ENCODE measurements at regions of chr20 and their contacts with region 1.

Region 1: DNA sequence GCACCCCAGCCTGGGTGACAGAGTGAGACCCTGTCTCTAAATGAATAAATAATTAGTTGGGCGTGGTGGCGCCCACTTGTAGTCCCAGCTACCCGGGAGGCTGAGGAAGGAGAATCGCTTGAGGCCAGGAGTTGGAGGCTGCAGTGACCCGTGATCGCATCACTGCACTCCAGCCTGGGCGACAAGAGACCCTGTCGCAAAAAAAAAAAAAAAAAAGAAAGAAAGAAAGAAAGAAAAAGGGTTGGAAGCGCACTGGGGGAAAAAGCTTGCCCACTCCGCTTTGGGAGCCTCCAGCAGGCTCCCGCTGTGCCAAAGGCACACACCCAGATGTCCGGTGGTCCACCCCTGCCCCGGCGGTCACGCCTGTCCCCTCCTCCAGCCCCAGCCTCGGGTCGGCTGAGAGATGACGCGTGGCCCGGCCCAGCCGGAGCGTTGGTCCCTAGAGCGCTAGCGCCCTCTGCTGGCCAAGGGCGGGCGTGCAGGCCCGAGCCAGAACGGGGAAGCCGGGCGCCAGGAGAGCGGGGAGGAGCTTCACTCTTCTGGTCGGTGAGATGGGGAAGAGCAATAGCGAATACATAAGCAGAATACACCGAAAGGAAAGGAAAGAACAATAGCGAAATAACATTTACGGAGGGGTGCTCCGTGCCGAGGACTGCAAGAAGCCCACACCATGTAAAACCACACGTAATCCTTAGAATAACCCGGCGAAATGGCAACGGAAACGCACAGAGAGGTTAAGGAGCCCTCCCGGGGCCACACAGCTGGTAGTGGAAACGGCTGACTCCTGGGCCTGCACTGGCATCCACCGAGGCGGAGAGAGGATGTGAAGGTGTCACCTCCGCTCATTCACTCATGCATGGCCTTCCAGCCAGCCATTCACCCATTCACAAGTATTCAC is 41.7 kb downstream of the UBE2V1 start:
- DNase-seq: peak; percentile 96
- H3K4me3 ChIP-seq: peak overlapping the region; percentile 37 to 70
- H3K27ac ChIP-seq: 0 out of 4 replicates have a peak overlapping the region, but pooled peaks of 1 of the 2 experiments have one; percentile 3
- H3K4me1 ChIP-seq: peaks cover 0 to 5% of the 10 kb centered on the region in 2 experiments; a peak in 1 of 4 replicates
- H3K27me3 ChIP-seq: no peaks in the 10 kb centered on the region
- CTCF ChIP-seq: peak; percentile 99
- EP300 ChIP-seq: no peak
- RAD21 ChIP-seq: peak; percentile 99

Region 2: DNA sequence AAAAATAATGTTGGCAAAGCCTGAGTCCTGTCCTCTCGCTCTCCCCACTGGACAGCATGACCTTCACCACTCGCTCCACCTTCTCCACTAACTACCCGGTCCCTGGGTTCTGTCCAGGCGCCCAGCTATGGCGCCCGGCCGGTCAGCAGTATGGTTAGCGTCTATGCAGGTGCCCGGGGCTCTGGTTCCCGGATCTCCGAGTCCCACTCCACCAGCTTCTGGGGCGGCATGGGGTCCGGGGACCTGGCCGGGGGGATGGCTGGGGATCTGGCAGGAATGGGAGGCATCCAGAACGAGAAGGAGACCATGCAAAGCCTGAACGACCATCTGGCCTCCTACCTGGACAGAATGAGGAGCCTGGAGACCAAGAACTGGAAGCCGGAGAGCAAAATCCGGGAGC is 114.6 kb before region 1 on chr20:
- CTCF ChIA-PET with region 1: interaction called, 14 read pairs
- POLR2A ChIA-PET with region 1: no interaction called
- DNase-seq: no peak
- H3K4me3 ChIP-seq: no peak overlapping the region
- H3K27ac ChIP-seq: no peak overlapping the region
- H3K4me1 ChIP-seq: no peaks in the 10 kb centered on the region; a peak in 1 of 4 replicates
- H3K27me3 ChIP-seq: no peaks in the 10 kb centered on the region
- CTCF ChIP-seq: no peak
- EP300 ChIP-seq: no peak
- RAD21 ChIP-seq: no peak

Region 3: GRCh38 chr20:50012282-50013263 is 58.7 kb before region 1 on chr20:
- CTCF ChIA-PET with region 1: interaction called, 38 read pairs
- POLR2A ChIA-PET with region 1: no interaction called
- DNase-seq: peak; percentile 51
- H3K4me3 ChIP-seq: no peak overlapping the region
- H3K27ac ChIP-seq: no peak overlapping the region
- H3K4me1 ChIP-seq: peaks cover 0 to 31% of the 10 kb centered on the region in 2 experiments; a peak in 1 of 4 replicates
- H3K27me3 ChIP-seq: no peaks in the 10 kb centered on the region
- CTCF ChIP-seq: no peak
- EP300 ChIP-seq: no peak
- RAD21 ChIP-seq: no peak

Region 4: DNA sequence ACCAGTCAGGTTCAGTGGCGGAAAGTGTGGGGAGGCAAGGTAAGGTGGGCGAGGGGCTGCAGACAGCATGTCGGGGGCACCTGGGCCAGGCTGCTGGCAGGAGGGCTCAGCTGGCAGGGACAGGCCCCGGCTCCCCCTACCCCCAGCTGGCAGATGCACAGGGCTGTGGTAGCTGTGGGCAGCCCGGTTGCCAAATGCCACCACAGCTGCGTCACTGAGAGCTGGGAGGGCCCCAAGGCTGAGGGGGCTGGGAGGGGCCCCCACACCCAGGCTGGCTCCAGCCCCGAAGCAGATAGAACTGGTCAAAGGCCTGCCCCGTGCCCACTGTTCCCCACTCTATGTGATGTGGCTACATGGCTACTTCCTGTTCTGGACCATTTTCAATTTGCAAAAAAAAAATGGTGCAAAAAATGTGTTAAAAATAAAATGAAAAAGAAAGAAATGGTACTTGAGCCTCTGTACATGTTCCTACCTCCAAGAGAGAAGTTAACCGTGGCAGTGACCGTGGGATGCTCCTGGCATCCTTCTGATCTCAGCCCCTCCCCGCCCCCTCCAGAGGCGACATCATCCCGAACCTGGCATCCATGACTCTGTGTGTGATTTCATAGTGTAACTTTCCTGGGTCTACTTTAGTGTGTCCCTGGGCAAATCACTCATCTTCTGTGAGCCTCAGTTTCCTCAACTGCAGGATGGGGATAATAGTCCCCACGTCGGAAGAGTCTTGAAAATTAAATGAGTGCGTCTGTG is 22.6 kb before region 1 on chr20:
- CTCF ChIA-PET with region 1: interaction called, 12 read pairs
- POLR2A ChIA-PET with region 1: interaction called, 3 read pairs
- DNase-seq: no peak
- H3K4me3 ChIP-seq: no peak overlapping the region
- H3K27ac ChIP-seq: peak overlapping the region; percentile 30 to 66; a peak in 3 of 4 replicates
- H3K4me1 ChIP-seq: peaks cover 14 to 32% of the 10 kb centered on the region in 2 experiments; a peak in 2 of 4 replicates
- H3K27me3 ChIP-seq: no peaks in the 10 kb centered on the region
- CTCF ChIP-seq: no peak
- EP300 ChIP-seq: no peak
- RAD21 ChIP-seq: no peak

Region 5: DNA sequence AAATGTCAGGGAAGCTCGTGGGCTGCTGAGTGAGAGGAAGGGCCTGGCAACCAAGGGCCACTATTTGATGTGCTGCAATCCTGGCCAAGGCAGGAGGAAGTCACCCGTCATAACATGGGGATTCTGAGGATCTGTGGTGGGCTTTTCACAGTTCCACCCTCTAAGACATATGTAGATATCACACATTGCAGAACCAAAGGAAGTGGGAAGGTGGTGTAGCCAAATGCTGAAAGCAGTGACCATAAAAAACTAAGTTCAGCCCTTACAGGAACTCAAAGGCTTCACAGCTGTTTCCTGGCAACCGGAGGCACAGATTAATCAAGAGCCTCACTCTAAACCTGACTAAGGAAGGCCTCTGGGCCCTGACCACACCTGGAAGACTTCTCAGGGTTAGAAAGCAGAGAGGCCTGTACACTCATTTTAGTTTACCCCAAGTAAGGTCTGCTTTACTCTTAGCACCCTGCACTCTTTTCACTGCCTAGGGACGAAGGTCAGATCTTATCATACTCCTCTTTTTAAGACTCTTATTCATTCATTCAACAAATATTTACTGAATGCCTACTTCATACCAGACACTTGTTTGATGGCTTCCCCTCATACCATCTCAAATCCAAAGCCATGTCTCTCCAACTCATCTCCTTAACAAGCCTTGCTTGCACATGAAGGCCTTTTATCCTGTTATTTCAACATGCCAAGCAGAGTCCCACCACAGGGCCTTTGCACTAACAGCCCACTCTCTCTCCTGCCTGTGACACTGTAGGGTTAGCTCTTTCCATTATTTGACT is 39.1 kb after region 1 on chr20:
- CTCF ChIA-PET with region 1: interaction called, 29 read pairs
- POLR2A ChIA-PET with region 1: no interaction called
- DNase-seq: no peak
- H3K4me3 ChIP-seq: 0 out of 4 replicates have a peak overlapping the region, but pooled peaks of 1 of the 2 experiments have one; percentile 83
- H3K27ac ChIP-seq: peak overlapping the region in 1 of 2 experiments; percentile 91; a peak in 3 of 4 replicates
- H3K4me1 ChIP-seq: peaks cover 46% of the 10 kb centered on the region in 2 experiments; a peak in 3 of 4 replicates
- H3K27me3 ChIP-seq: no peaks in the 10 kb centered on the region
- CTCF ChIP-seq: no peak
- EP300 ChIP-seq: no peak
- RAD21 ChIP-seq: no peak

Region 6: DNA sequence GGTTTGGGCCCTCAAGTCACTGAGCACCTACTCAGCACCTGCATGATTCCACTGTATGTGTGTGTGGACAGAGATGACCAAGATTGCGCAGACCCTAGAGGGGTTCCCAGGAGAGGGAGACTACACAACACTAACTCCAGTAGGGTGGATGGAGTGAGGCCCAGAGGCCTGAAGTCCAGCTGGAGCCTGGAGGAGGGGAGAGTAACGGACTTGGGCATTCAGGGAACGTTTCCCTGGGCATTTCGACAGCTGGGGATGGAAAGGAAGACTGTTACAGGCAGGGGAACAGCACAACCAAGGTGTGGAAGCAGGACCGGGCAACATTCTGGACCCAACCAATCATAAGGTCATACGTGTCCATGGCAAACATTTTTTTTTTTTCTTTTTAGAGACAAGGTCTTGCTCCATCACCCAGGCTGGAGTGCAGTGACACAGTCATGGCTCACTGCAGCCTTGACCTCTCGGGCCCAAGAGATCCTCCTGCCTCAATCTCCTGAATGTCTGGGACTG is 108.3 kb after region 1 on chr20:
- CTCF ChIA-PET with region 1: interaction called, 10 read pairs
- POLR2A ChIA-PET with region 1: interaction called, 3 read pairs
- DNase-seq: no peak
- H3K4me3 ChIP-seq: no peak overlapping the region
- H3K27ac ChIP-seq: no peak overlapping the region
- H3K4me1 ChIP-seq: peaks cover 0 to 2% of the 10 kb centered on the region in 2 experiments; a peak in 1 of 4 replicates
- H3K27me3 ChIP-seq: no peaks in the 10 kb centered on the region
- CTCF ChIP-seq: no peak
- EP300 ChIP-seq: no peak
- RAD21 ChIP-seq: no peak

Measured in SK-N-SH (cell line).